PC-9 (cell line): ENCODE measurements at regions of chr1 and their contacts with region 1.

Region 1: GRCh38 chr1:182889997-182890396 is 50.9 kb downstream of the DHX9 start:
- DNase-seq: no peak
- H3K4me3 ChIP-seq: no peak overlapping the region
- H3K27ac ChIP-seq: no peak overlapping the region
- H3K4me1 ChIP-seq: peaks cover 13% of the 10 kb centered on the region
- H3K27me3 ChIP-seq: no peaks in the 10 kb centered on the region
- CTCF ChIP-seq: no peak

Region 2: DNA sequence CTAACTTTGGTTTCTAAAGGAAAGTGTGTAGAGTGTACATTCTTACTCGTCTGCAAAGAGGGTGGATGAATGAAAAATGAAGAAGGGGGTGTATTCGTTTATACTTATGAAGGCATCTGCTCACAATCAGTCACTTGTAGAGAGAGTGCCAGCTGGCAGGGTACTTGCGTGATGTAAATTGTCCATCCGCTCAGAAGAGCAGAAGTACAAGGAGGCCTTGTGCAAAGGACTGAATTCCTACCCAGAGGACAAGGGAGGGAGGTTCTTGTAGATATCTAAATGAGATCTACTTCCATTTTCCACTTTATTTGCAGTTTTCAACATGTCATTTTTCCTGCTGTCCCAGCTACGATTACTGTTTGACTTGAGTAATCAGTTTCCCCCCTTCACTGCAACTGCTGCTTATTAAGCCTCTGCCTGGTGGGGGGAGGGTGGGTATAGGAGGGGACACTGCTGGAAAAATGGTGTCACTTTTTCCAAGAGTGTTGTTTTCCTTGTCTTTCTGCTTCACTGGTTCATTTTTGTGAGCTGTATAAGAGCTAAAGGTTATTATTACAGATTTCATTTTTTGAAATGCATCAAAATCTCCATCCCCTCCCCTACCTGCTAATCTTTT is 200.5 kb after region 1 on chr1:
- CTCF ChIA-PET with region 1: no interaction called
- POLR2A ChIA-PET with region 1: no interaction called
- intact Hi-C with region 1: loop called (anchors 10 kb)
- DNase-seq: no peak
- H3K4me3 ChIP-seq: no peak overlapping the region
- H3K27ac ChIP-seq: no peak overlapping the region
- H3K4me1 ChIP-seq: peaks cover 58% of the 10 kb centered on the region
- H3K27me3 ChIP-seq: no peaks in the 10 kb centered on the region
- CTCF ChIP-seq: no peak

Region 3: GRCh38 chr1:183385340-183386144 is 495.5 kb after region 1 on chr1:
- CTCF ChIA-PET with region 1: no interaction called
- POLR2A ChIA-PET with region 1: no interaction called
- intact Hi-C with region 1: no loop called
- DNase-seq: no peak
- H3K4me3 ChIP-seq: no peak overlapping the region
- H3K27ac ChIP-seq: no peak overlapping the region
- H3K4me1 ChIP-seq: no peaks in the 10 kb centered on the region
- H3K27me3 ChIP-seq: no peaks in the 10 kb centered on the region
- CTCF ChIP-seq: no peak